ENCODE measurements at regions of chr4 and their contacts with region 1.

Region 1: DNA sequence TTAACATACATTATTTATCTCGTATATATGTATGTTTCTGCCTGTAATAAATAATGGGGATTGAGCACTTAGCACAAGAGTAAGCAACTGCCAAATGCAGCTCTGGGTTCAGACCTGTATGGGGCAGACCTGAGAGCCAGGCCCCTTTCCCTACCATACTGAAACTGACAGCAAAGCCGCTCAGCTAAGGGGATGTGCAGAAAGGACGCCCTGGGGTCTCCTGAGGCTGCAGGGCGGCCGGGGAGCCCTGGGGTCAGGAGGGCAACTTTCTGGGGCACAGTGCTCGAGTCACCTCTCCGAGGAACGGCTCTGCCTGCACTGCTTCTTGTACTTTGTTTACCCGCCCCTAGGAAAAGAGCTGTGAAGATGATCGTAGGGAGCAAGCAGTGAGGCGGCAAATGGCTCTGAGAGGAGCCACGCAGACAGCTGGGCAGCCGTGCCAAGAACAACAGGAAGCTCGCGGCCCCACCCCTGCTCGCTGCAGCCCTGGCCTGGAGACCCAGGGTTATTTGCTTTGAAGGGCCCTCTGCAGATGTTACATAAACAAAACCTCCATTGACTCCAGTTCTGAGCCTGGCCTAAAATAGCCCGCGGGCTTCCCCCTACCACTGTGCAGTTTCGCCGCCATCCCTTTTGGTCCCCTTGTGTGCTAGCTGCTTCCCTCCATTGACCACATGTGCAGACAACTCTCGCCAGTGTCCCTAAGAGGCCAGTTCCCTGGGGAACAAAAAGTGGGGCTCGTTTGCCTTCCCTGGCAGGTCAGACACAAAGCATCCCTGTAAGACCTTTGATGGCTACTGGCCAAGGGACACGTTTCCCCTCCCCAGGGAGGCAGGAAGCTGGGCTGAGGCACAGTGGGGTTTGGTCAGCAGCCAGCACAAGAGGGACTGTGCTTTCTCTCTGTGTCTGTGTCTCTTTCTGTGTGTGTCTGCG is 111.3 kb upstream of the LNX1 start:
- DNase-seq: peak; percentile 46 to 59
- H3K4me3 ChIP-seq: peak overlapping the region; percentile 23; the same call in 1 of the 2 replicates
- H3K27ac ChIP-seq: no peak overlapping the region
- H3K4me1 ChIP-seq: 0 out of 2 replicates have a peak, but pooled peaks cover 7% of the 10 kb centered on the region
- H3K27me3 ChIP-seq: no peaks in the 10 kb centered on the region
- CTCF ChIP-seq: no peak

Region 2: GRCh38 chr4:53490965-53491622 is 211.5 kb before region 1 on chr4:
- CTCF ChIA-PET with region 1: no interaction called
- POLR2A ChIA-PET with region 1: no interaction called
- intact Hi-C with region 1: loop called (anchors 2 kb)
- DNase-seq: peak in 1 of 2 experiments; percentile 65
- H3K4me3 ChIP-seq: no peak overlapping the region
- H3K27ac ChIP-seq: no peak overlapping the region
- H3K4me1 ChIP-seq: no peaks in the 10 kb centered on the region
- H3K27me3 ChIP-seq: no peaks in the 10 kb centered on the region
- CTCF ChIP-seq: peak; percentile 65

Measured in PC-9 (cell line).